ENCODE measurements at regions of chr7 and their contacts with region 1.

Region 1: DNA sequence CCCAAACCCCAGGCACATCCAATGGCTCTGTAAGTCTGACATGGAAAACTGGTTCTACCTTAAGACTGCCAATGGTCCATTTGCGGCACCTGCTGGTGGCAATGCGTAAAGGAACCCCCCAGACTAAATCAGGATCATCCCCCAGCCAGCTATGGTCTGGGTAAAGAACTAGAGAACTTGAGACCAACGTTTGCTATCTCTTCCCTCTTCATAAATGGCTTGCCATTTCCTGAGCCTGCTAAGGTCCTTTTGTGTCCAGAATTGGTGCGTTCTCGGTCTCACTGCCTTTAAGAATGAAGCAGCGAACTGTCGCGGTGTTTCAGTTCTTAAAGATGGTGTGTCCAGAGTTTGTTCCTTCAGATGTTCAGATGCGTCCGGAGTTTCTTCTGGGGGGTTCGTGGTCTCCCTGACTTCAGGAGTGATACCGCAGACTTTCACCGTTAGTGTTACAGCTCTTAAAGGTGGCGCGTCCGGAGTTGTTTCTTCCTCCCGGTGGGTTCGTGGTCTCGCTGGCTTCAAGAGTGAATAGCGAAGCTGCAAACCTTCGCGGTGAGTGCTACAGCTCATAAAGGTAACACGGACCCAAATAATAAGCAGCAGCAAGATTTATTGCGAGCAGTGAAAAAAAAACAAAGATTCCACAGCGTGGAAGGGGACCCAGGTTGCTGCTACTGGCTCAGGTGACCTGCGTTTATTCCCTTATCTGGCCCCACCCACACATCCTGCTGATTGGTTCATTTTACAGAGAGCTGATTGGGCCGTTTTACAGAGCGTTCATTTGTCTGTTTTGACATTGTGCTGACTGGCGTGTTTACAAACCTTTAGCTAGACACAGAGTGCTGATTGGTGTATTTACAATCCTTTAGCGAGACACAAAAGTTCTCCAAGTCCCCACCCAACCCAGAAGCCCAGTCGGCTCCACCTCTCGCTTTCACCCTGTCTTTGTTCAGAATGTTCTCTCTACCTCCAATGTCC is 95.4 kb downstream of the ELMO1 start:
- DNase-seq: peak; percentile 83
- ATAC-seq: peak; percentile 76
- H3K4me3 Mint-ChIP-seq: peak overlapping the region; percentile 86
- H3K27ac Mint-ChIP-seq: peak overlapping the region; percentile 99
- H3K4me1 Mint-ChIP-seq: peaks cover 87% of the 10 kb centered on the region
- H3K27me3 Mint-ChIP-seq: no peaks in the 10 kb centered on the region

Region 2: GRCh38 chr7:36198854-36199266 is 1154.4 kb before region 1 on chr7:
- CTCF ChIA-PET with region 1: no interaction called
- POLR2A ChIA-PET with region 1: no interaction called
- intact Hi-C with region 1: no loop called
- DNase-seq: no peak
- ATAC-seq: peak; percentile 23
- H3K4me3 Mint-ChIP-seq: no peak overlapping the region
- H3K27ac Mint-ChIP-seq: no peak overlapping the region
- H3K4me1 Mint-ChIP-seq: peaks cover 31% of the 10 kb centered on the region
- H3K27me3 Mint-ChIP-seq: no peaks in the 10 kb centered on the region

Region 3: DNA sequence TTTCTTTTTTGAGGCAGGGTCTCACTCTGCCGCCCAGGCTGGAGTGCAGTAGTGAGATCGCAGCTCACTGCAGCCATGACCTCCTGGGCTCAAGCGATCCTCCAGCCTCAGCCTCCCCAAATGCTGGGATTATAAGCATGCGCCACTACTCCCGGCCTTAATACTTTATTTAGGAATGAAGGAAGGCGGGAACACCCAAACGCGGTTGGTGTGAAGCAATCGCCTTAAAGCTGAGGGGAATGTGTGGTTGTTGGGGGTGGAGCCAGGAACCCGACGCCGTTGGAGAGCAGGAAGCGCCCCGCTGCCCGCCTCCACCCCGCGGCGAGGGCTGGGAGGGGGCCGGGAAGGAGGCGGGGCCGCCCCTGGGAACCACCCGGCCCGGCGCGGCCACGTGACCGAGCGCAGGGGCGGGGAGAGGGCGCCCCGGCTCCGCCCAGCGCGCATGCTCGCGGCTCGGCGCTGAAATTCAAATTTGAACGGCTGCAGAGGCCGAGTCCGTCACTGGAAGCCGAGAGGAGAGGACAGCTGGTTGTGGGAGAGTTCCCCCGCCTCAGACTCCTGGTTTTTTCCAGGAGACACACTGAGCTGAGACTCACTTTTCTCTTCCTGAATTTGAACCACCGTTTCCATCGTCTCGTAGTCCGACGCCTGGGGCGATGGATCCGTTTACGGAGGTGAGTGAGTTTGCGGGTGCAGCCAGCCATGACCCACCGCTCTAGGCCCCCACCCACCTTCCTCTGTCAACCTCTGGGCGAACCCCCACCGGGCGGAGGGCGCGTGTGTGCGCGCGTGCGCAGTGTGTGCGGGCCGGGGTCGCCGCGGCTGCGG is 963.7 kb before region 1 on chr7 and contains the start of gene ANLN:
- CTCF ChIA-PET with region 1: no interaction called
- POLR2A ChIA-PET with region 1: interaction called, 15 read pairs
- intact Hi-C with region 1: loop called in 1 of 2 experiments (anchors 5 kb)
- DNase-seq: peak; percentile 92
- ATAC-seq: peak; percentile 86
- H3K4me3 Mint-ChIP-seq: peak within 1 kb of the TSS; percentile 87
- H3K27ac Mint-ChIP-seq: peak within 1 kb of the TSS; percentile 83
- H3K4me1 Mint-ChIP-seq: peaks cover 26% of the 10 kb centered on the region
- H3K27me3 Mint-ChIP-seq: peaks cover 8% of the 10 kb centered on the region
- total RNA-seq, gene ANLN: 52.5 to 58.3 TPM

Region 4: DNA sequence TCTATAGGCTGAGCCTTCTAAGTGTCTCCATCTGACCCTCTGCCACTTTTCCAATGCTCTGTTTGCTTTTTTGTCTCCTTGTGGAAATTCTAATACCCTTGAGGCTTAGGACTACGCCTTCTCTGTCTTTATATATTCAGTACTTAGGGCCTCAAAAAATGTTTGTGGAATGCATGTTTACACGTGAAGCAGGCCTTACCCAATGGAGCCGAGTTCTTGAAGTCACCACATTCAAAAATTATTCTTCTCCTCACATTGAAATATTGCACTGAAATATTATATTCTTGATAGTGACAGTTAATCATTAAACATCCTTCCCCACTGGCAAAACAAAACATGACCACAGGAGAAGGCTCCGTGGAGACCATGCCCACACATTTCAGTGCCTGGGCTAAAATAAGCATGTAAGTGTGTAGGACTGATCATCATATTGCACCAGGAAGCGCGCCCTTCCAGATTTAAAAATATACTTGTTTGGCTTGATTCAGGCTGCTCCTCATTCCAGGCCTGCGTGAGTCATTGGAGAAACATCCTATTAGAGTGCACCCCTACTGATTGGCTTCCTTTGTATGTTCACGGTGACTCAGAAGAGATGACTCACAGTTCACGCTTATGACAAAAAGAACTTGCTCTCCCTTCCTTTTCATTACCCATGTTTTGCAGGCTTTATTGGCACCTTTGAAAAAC is 321.5 kb before region 1 on chr7:
- CTCF ChIA-PET with region 1: no interaction called
- POLR2A ChIA-PET with region 1: no interaction called
- intact Hi-C with region 1: loop called in 1 of 2 experiments (anchors 5 kb)
- DNase-seq: peak; percentile 73
- ATAC-seq: peak; percentile 90
- H3K4me3 Mint-ChIP-seq: no peak overlapping the region
- H3K27ac Mint-ChIP-seq: peak overlapping the region; percentile 52
- H3K4me1 Mint-ChIP-seq: peaks cover 77% of the 10 kb centered on the region
- H3K27me3 Mint-ChIP-seq: no peaks in the 10 kb centered on the region

Region 5: GRCh38 chr7:37284805-37285231 is 68.4 kb before region 1 on chr7:
- CTCF ChIA-PET with region 1: interaction called, 38 read pairs
- POLR2A ChIA-PET with region 1: no interaction called
- intact Hi-C with region 1: loop called (anchors 1 kb)
- DNase-seq: peak; percentile 62
- ATAC-seq: peak; percentile 33
- H3K4me3 Mint-ChIP-seq: no peak overlapping the region
- H3K27ac Mint-ChIP-seq: peak overlapping the region; percentile 8
- H3K4me1 Mint-ChIP-seq: peaks cover 47% of the 10 kb centered on the region
- H3K27me3 Mint-ChIP-seq: no peaks in the 10 kb centered on the region

Region 6: GRCh38 chr7:37365405-37365804 is 12.1 kb after region 1 on chr7:
- CTCF ChIA-PET with region 1: interaction called, 5 read pairs
- POLR2A ChIA-PET with region 1: interaction called, 14 read pairs
- intact Hi-C with region 1: loop called in 1 of 2 experiments (anchors 1 kb)
- DNase-seq: peak; percentile 16
- ATAC-seq: peak; percentile 48
- H3K4me3 Mint-ChIP-seq: no peak overlapping the region
- H3K27ac Mint-ChIP-seq: peak overlapping the region; percentile 99
- H3K4me1 Mint-ChIP-seq: peaks cover 85% of the 10 kb centered on the region
- H3K27me3 Mint-ChIP-seq: no peaks in the 10 kb centered on the region

Region 7: DNA sequence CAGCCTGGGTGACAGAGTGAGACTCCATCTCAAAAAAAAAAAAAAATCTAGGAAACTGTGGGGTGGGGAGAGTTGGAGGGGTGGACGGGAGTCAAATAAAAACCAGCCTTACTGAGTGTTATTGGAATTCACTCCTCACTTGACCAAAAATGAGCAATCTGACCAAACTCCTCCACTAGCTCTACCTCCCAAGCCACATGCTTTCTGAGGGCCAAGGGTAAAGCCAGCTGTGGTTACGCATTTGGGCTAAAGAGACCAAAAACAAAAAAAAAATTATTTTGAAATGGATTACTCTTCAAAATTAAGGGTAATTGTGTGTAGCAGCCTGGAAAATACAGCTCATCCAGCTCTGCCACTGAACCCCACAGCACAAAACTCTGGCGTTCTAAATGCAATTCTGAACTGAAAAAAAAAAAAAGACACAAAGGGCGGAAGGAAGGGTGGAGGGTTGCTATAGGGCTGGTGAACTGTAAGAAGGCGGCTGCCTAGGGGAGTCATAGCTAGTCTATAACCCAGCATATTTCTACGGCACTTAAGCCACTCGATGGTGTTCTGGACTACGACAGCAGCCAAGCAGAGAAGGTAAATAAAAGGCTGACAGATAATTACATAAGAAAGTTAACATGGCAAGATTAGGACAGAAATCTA is 87.6 kb after region 1 on chr7:
- CTCF ChIA-PET with region 1: interaction called, 33 read pairs
- POLR2A ChIA-PET with region 1: interaction called, 12 read pairs
- intact Hi-C with region 1: loop called (anchors 1 kb)
- DNase-seq: peak; percentile 67
- ATAC-seq: peak; percentile 76
- H3K4me3 Mint-ChIP-seq: peak overlapping the region; percentile 61
- H3K27ac Mint-ChIP-seq: peak overlapping the region; percentile 86
- H3K4me1 Mint-ChIP-seq: peaks cover 89% of the 10 kb centered on the region
- H3K27me3 Mint-ChIP-seq: no peaks in the 10 kb centered on the region

Measured in activated CD4-positive, alpha-beta T cell treated with anti-CD3 and anti-CD28 coated beads for 36 hours (primary cell).